Left cardiac atrium (tissue), 4 donors: ENCODE measurements at regions of chr18 and their contacts with region 1.

Region 1: DNA sequence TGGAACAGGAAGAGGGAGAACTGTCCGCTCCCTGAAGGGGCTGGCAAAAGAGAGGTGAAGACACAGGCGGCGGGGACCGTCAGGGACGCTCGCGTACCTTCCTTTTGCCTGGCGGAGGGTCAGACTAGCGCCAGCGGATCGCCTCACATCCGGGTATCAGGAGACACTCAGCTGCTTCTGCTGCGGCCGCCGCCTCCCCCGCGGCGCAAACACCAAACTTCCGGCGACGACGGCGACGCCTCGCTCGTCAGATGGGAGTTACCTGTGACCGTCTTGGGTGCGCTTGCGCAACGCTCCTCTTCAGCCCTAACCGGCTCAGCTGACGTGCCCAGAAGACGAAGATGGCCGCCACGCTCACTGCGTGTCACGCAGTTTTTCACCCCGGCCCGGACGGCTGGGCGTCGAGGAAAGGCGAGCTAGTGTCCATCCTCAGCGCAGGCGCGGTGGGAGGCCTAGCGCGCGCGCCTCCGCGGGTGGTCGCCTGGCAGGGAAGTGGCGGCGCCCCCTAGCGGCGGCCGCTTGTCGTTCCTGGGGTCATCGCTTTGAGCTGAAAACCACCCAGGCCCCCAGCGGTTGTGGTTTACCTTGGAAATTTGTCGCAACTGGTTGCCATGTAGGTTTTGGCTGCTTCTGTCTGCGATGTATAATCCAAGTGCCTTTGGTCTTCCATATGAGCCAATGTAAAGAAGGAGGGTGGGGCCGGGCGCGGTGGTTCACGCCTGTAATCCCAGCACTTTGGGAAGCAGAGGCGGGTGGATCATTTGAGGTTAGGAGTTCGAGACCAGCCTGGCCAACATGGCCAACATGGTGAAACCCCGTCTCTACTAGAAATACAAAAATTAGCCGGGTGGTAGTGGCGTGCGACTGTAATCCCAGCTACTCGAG is at the start of gene ESCO1:
- DNase-seq: peak; percentile 97
- ATAC-seq: peak; percentile 94 to 96
- total RNA-seq, gene ESCO1: 8.6 to 11.7 TPM

Region 2: DNA sequence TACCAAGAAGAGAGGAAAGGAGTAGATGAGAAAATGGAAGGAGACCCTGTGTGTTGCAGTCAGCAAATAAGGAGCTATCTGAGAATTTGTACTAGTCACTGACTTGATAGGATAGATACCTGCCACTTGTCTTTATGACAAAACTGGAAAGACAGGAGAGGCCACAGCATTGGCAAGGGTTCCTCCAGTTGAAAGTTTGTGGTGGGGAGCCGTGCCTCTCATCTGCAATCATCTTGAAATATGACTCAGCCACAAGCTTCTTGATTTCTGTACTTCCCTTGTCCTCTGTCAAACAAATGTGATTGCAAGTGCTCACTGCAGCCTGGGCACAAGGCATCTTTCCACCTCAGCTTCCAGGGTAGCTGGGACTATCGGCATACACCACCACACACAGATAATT is 259.6 kb before region 1 on chr18:
- intact Hi-C with region 1: no loop called
- DNase-seq: no peak
- ATAC-seq: no peak

Region 3: DNA sequence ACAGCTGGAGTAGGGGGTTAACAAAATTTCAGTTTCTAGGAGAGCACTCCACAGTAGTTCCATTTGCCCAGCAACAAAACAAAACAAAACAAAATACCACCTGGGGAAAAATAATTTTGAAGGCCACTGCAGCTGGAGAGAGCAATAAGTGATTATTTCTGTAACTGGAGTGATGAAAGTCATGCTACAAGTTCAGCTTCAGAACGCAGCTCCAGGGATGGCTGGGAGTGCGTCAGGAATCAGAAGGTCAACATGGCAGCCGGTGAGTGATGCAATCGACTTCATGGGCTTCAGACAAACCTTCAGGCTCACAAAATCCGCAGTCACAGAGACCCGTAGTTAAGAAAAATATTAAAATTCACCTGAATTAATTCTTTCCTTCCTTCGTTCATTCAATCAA is 62.8 kb after region 1 on chr18:
- intact Hi-C with region 1: no loop called
- DNase-seq: peak; percentile 33
- ATAC-seq: no peak

Region 4: DNA sequence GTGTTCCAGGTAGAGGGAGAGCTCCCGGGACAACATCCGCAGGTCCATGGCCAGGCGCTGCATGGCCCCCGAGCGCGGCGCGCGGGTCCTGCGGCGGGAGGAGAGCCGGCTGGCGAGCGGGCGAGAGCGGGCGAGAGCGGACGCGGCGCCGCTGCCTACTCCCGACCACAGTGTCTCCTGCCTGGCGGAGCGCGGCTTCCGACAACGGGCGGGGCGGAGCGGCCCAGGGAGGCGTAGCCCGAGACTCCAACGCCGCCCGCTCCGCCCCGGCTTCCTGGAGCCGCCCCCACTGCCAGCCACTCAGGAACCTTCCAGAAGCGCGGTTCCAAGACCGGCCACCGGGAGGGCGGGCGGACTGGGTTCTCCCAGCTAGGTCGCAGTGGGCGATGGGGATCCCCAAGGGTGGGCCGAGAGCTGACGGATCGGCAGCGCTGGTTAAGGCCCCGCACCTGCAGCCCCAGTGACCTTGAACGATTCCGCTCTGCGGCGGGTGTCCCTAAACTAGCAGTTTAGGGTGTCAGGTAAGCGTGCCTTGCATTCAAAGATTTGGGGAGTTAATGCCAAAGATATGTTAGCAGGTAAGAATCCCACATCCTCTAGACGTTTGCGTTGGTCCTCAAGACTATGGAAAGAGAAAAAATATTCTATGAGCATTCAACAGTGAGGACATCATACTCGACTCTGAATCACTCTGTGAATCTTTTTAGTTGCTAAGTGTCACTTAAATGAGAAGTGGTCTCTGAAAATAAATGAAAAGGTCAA is 104.0 kb after region 1 on chr18 and contains the start of gene ABHD3:
- intact Hi-C with region 1: loop called in 1 of 2 experiments (anchors 10 kb)
- DNase-seq: peak; percentile 96
- ATAC-seq: peak; percentile 99 to 100
- total RNA-seq, gene ABHD3: 6.6 to 8.7 TPM

Region 5: GRCh38 chr18:21868770-21869169 is 268.0 kb after region 1 on chr18:
- intact Hi-C with region 1: no loop called
- DNase-seq: no peak
- ATAC-seq: no peak

Region 6: DNA sequence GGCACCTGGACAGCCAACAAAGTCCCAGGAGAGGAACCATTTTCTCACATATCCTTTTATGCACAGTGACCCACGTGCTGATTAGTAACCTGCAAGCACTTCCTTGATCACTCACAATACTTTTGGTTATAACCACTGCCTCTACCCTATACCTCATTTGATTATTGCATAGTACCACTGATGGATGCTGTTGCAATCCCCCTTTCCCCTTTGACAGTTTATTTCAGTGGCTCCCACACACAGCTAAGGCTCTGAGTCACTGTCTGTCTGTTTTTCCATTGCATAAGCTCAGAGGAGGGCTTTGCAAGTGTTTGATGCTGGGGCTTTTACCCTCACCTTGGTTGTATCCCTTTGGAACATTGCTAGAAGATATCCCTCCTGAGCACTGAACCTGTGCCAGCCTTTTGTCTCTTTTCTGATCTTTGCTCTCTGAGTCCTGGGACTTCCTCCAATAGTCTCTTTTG is 1230.7 kb after region 1 on chr18:
- intact Hi-C with region 1: no loop called
- DNase-seq: no peak
- ATAC-seq: peak in 1 of 2 donors; percentile 83